ENCODE measurements at regions of chr5 and their contacts with region 1.

Region 1: DNA sequence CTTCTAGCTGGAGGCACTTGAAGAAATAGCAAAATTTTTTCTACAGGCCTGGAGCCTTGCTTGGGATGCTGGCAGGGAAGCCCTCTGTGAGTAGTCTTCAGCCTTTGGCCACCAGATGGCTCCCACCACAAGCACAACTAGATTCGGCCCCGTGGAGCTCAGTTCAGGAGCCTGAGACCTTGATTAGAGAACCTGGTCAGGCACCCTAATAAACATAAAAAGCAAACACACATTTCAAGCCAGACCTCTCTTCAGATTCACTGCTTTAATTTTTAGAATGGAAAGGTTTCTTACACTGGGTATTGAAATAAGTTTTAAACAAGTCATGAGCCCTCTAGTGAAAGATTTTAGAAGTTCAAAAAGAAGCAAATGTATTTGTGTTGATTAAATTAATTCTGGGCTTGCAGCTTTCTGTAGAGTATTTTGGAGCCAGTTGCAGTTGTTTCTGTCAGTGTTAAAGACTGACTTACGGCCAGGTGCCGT is 41.4 kb downstream of the GLRX start:
- DNase-seq: peak; percentile 46 to 86 (median 73)
- ATAC-seq: peak; percentile 97
- H3K4me3 ChIP-seq: peak overlapping the region in 1 of 2 experiments; percentile 43
- H3K4me3 Mint-ChIP-seq: peak overlapping the region; percentile 78
- H3K27ac ChIP-seq: no peak overlapping the region
- H3K27ac Mint-ChIP-seq: peak overlapping the region; percentile 68
- H3K4me1 ChIP-seq: peaks cover 10% of the 10 kb centered on the region
- H3K4me1 Mint-ChIP-seq: peaks cover 14% of the 10 kb centered on the region
- H3K27me3 ChIP-seq: no peaks in the 10 kb centered on the region
- H3K27me3 Mint-ChIP-seq: no peaks in the 10 kb centered on the region
- CTCF ChIP-seq: peak; percentile 99

Region 2: DNA sequence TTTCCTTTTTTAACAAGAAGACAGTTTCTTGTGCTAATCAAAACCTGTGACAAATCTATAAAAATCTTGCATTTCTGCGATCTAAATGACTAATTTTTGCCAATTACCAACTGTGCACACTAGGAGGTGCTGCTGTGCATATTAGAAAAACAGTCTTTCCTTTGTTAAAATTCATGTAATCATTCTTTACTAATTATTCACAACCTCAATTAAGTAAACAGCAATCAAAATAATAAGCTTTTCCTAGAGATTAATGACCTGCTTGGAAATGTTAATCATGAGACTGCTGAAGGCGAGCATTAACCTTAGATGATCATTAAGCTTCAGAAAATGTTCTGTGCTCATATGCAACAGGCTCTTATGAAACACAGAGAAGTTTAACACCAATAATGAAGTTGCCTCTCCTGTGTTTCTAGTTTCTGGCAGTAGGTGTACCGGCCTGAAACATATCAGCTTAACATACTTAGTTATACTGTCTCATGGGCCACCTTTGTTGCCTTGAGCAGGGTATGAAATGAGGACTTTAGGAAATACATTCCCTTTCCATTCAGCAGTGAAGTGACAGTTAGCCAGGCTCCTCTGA is 116.8 kb before region 1 on chr5:
- CTCF ChIA-PET with region 1: interaction called, 14 read pairs
- POLR2A ChIA-PET with region 1: no interaction called
- intact Hi-C with region 1: loop called (anchors 2 to 5 kb)
- DNase-seq: peak in 4 of 9 experiments; percentile 29 to 55 (median 42)
- ATAC-seq: peak; percentile 54
- H3K4me3 ChIP-seq: no peak overlapping the region
- H3K4me3 Mint-ChIP-seq: no peak overlapping the region
- H3K27ac ChIP-seq: no peak overlapping the region
- H3K27ac Mint-ChIP-seq: no peak overlapping the region
- H3K4me1 ChIP-seq: no peaks in the 10 kb centered on the region
- H3K4me1 Mint-ChIP-seq: peaks cover 3% of the 10 kb centered on the region
- H3K27me3 ChIP-seq: no peaks in the 10 kb centered on the region
- H3K27me3 Mint-ChIP-seq: no peaks in the 10 kb centered on the region
- CTCF ChIP-seq: peak; percentile 94

Region 3: GRCh38 chr5:95799191-95799860 is 18.2 kb after region 1 on chr5:
- CTCF ChIA-PET with region 1: interaction called, 154 read pairs
- POLR2A ChIA-PET with region 1: no interaction called
- intact Hi-C with region 1: no loop called
- DNase-seq: no peak
- ATAC-seq: no peak
- H3K4me3 ChIP-seq: no peak overlapping the region
- H3K4me3 Mint-ChIP-seq: no peak overlapping the region
- H3K27ac ChIP-seq: no peak overlapping the region
- H3K27ac Mint-ChIP-seq: no peak overlapping the region
- H3K4me1 ChIP-seq: no peaks in the 10 kb centered on the region
- H3K4me1 Mint-ChIP-seq: no peaks in the 10 kb centered on the region
- H3K27me3 ChIP-seq: no peaks in the 10 kb centered on the region
- H3K27me3 Mint-ChIP-seq: no peaks in the 10 kb centered on the region
- CTCF ChIP-seq: no peak

Region 4: GRCh38 chr5:95822542-95823181 is 41.5 kb after region 1 on chr5 and contains the start of gene GLRX:
- CTCF ChIA-PET with region 1: interaction called, 111 read pairs
- POLR2A ChIA-PET with region 1: interaction called, 6 read pairs
- intact Hi-C with region 1: loop called in 1 of 2 experiments (anchors 2 kb)
- DNase-seq: peak in 8 of 9 experiments; percentile 42 to 75 (median 60)
- ATAC-seq: peak; percentile 39
- H3K4me3 ChIP-seq: peak within 1 kb of the TSS; percentile 89 to 91
- H3K4me3 Mint-ChIP-seq: peak within 1 kb of the TSS; percentile 98
- H3K27ac ChIP-seq: peak within 1 kb of the TSS; percentile 65 to 84
- H3K27ac Mint-ChIP-seq: peak within 1 kb of the TSS; percentile 96
- H3K4me1 ChIP-seq: peaks cover 52% of the 10 kb centered on the region
- H3K4me1 Mint-ChIP-seq: peaks cover 66% of the 10 kb centered on the region
- H3K27me3 ChIP-seq: no peaks in the 10 kb centered on the region
- H3K27me3 Mint-ChIP-seq: no peaks in the 10 kb centered on the region
- CTCF ChIP-seq: no peak
- total RNA-seq, gene GLRX: 17.9 to 19.5 TPM

Region 5: DNA sequence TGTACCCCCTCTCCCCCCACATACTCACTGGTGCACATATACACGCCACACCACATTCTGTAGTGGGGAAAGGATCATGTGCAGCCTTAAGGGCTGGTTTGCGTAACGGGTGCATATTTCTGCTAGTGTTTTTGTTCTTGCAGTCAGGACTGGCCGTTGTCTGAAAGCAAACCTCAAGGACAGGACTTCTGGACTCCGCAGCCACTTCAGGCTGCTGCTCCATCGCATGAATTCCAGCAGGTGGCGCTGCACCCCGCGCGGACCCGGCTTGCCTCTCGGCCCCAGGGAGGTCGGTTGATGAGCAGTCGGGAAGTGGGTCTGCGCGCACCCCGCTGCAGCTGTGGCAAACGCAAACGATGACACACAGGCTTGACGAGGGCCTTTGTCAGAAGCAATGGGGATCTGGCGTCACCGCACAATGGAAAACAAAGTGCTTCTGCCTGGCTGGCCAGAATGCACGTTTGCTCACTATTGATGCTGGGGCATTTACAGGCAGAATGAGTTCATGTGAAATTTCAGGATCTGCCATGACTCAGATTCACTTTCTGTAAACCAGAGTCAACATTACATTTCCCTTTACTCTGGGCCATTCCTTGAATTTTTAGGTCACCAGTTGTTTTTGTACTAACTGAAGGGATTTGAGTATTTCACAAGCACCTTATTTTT is 77.7 kb after region 1 on chr5:
- CTCF ChIA-PET with region 1: interaction called, 641 read pairs
- POLR2A ChIA-PET with region 1: interaction called, 4 read pairs
- intact Hi-C with region 1: no loop called
- DNase-seq: peak; percentile 76 to 95 (median 92)
- ATAC-seq: peak; percentile 98
- H3K4me3 ChIP-seq: no peak overlapping the region
- H3K4me3 Mint-ChIP-seq: peak overlapping the region; percentile 47
- H3K27ac ChIP-seq: no peak overlapping the region
- H3K27ac Mint-ChIP-seq: peak overlapping the region; percentile 34
- H3K4me1 ChIP-seq: peaks cover 9% of the 10 kb centered on the region
- H3K4me1 Mint-ChIP-seq: peaks cover 25% of the 10 kb centered on the region
- H3K27me3 ChIP-seq: no peaks in the 10 kb centered on the region
- H3K27me3 Mint-ChIP-seq: peaks cover 10% of the 10 kb centered on the region
- CTCF ChIP-seq: peak; percentile 93

Region 6: DNA sequence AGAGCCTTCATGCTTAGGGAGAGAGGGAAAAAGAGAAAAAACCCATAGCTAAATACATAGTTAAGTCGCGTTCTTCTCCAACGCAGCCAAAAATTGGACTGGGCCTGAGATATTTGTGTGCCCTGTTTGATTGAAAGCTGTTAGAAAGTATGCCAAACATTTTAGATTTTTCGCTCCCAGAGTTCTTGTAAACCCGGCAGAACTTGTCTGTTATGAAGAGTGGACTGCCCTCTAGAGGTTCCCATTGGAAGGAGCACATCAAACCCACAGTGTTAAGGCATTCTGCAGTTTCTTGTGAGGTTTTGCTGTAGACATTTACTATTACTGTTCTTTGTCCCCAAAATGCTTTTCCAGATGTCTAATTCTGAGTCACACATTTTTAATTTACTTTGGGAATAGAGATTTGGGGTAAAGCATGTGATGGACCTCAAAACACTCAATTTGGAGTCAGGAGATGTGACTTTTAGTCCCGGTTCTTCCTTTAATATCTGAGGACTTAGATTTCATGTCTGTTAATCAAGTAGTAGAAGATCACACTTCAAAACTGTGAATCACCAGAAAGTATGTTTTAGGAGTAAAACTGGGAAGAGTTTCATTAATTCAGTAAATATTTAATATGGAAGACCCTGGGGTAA is 555.3 kb after region 1 on chr5:
- CTCF ChIA-PET with region 1: interaction called, 17 read pairs
- POLR2A ChIA-PET with region 1: no interaction called
- intact Hi-C with region 1: loop called (anchors 1 to 2 kb)
- DNase-seq: peak; percentile 19 to 81 (median 57)
- ATAC-seq: peak; percentile 97
- H3K4me3 ChIP-seq: no peak overlapping the region
- H3K4me3 Mint-ChIP-seq: no peak overlapping the region
- H3K27ac ChIP-seq: no peak overlapping the region
- H3K27ac Mint-ChIP-seq: no peak overlapping the region
- H3K4me1 ChIP-seq: no peaks in the 10 kb centered on the region
- H3K4me1 Mint-ChIP-seq: no peaks in the 10 kb centered on the region
- H3K27me3 ChIP-seq: no peaks in the 10 kb centered on the region
- H3K27me3 Mint-ChIP-seq: peaks cover 14% of the 10 kb centered on the region
- CTCF ChIP-seq: peak; percentile 92